Calu3 (cell line): ENCODE measurements at regions of chr9 and their contacts with region 1.

Region 1: DNA sequence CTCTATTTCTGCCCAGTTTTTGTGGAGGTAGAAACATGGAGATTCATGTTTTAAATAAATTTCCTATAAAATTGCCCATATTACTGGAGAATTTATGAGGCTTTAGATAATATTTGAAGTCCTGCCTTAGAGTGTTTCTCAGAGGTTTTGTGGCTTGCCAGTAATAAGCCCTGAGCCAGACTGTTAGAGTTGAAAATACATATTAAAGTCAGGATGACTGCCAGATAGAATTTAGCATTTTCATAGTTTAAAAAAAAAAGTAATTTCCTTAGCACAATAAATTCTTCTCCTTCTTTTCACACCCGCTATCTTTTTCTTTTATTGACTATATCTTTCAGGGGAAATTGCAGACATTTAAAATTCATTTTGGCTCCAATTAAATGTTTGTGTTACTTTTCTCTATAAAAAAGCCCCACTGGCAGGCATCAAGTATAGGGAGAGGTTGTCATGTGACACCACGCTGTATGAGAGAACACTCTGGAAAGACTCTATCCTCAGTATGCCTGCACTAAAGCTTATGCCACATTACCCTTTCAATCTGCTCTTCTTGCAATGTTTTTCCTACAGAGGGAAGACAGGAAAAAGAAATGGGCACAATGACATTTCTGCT is 135.2 kb downstream of the MPDZ start:
- DNase-seq: no peak
- H3K4me3 Mint-ChIP-seq: no peak overlapping the region
- H3K27ac Mint-ChIP-seq: no peak overlapping the region
- H3K4me1 Mint-ChIP-seq: peaks cover 11% of the 10 kb centered on the region
- H3K27me3 Mint-ChIP-seq: no peaks in the 10 kb centered on the region
- CTCF ChIP-seq: no peak

Region 2: DNA sequence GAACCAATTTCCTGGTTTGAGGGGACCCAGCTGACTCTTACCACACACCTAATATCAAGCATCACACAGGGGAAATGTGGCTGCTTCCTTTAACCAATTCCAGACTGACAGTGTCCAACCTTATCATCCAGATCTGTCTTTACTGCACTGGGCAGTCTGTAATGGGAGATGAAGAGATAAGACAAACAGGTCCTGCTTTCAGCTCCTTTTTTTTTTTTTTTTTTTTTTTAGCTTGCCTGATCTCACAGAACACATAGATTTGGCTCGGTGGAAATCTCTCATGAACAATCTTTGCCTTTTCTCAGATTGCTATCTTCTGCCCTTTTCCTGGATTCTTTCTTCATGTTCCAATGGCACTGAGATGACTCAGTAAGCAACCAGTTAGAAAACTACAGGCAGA is 649.8 kb before region 1 on chr9:
- CTCF ChIA-PET with region 1: interaction called, 17 read pairs
- intact Hi-C with region 1: no loop called
- DNase-seq: no peak
- H3K4me3 Mint-ChIP-seq: no peak overlapping the region
- H3K27ac Mint-ChIP-seq: no peak overlapping the region
- H3K4me1 Mint-ChIP-seq: no peaks in the 10 kb centered on the region
- H3K27me3 Mint-ChIP-seq: no peaks in the 10 kb centered on the region
- CTCF ChIP-seq: no peak

Region 3: GRCh38 chr9:12988253-12988652 is 156.0 kb before region 1 on chr9:
- CTCF ChIA-PET with region 1: no interaction called
- intact Hi-C with region 1: no loop called
- DNase-seq: no peak
- H3K4me3 Mint-ChIP-seq: no peak overlapping the region
- H3K27ac Mint-ChIP-seq: no peak overlapping the region
- H3K4me1 Mint-ChIP-seq: no peaks in the 10 kb centered on the region
- H3K27me3 Mint-ChIP-seq: no peaks in the 10 kb centered on the region
- CTCF ChIP-seq: no peak